Ascending aorta (tissue), 2 donors: ENCODE measurements at regions of chr5 and their contacts with region 1.

Region 1: GRCh38 chr5:42767491-42768105 is 11.0 kb downstream of the CCDC152 start:
- DNase-seq: no peak
- H3K4me3 ChIP-seq: no peak overlapping the region
- H3K27ac ChIP-seq: no peak overlapping the region
- H3K4me1 ChIP-seq: no peaks in the 10 kb centered on the region
- H3K27me3 ChIP-seq: no peaks in the 10 kb centered on the region
- CTCF ChIP-seq: peak; percentile 23 to 67 (median 35)

Region 2: DNA sequence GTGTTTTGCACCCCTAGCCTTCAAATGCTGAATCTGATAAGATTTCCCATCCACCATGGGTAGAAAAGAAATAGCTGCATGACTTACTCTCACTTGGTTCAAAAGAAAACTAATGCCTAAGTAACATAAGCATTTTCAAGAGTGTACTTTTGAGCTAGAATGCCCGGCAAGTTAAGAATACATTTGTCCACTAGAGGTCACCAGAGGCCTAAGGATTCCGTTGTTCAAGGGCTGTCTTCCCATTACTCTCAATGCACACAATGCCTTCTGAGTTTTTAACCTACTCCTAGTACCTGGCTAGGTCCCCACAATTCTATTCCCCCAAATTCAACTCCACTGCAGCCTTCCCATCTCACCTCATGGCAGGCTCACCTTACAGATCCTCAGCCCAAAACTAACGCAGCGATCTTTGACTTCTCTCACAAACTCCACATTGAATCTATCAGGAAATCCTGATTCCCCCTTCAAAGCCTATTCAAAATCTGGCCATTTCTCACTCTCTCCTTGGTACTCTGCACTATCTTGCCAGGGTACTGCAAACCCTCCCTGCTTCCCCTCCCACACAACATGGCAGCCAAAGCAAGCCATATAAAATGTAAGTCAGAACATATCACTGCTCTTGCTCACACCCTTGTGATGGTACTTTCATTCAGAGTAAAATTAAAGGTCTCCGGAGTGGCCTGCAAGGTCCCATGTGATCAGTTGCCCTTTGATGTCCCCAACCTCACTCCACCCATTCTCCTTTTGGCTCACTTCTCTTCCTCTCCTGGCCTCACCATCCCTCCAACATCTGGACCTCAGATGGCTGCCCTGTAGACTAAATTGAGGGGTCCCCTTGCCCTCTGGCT is 910.7 kb before region 1 on chr5:
- intact Hi-C with region 1: loop called (anchors 2 kb)
- DNase-seq: peak in 1 of 2 donors; percentile 73
- H3K4me3 ChIP-seq: no peak overlapping the region
- H3K27ac ChIP-seq: peak overlapping the region in 1 of 2 donors; percentile 32
- H3K4me1 ChIP-seq: no peaks in the 10 kb centered on the region
- H3K27me3 ChIP-seq: no peaks in the 10 kb centered on the region
- CTCF ChIP-seq: peak; percentile 45 to 76 (median 72)

Region 3: GRCh38 chr5:42005561-42006153 is 761.9 kb before region 1 on chr5:
- intact Hi-C with region 1: loop called (anchors 5 kb)
- DNase-seq: no peak
- H3K4me3 ChIP-seq: no peak overlapping the region
- H3K27ac ChIP-seq: no peak overlapping the region
- H3K4me1 ChIP-seq: no peaks in the 10 kb centered on the region
- H3K27me3 ChIP-seq: no peaks in the 10 kb centered on the region
- CTCF ChIP-seq: peak; percentile 4 to 64 (median 59)

Region 4: GRCh38 chr5:42423285-42424165 is 344.1 kb before region 1 on chr5 and contains the start of gene GHR:
- intact Hi-C with region 1: loop called (anchors 5 kb)
- DNase-seq: peak in 1 of 2 donors; percentile 91
- H3K4me3 ChIP-seq: peak within 1 kb of the TSS; percentile 68 to 73
- H3K27ac ChIP-seq: peak within 1 kb of the TSS; percentile 69 to 77
- H3K4me1 ChIP-seq: peaks cover 0 to 4% of the 10 kb centered on the region in 2 donors
- H3K27me3 ChIP-seq: no peaks in the 10 kb centered on the region
- CTCF ChIP-seq: peak; percentile 69 to 83 (median 79)
- total RNA-seq, gene GHR: 6.4 TPM

Region 5: GRCh38 chr5:43099615-43100014 is 332.0 kb after region 1 on chr5:
- intact Hi-C with region 1: no loop called
- DNase-seq: no peak
- H3K4me3 ChIP-seq: no peak overlapping the region
- H3K27ac ChIP-seq: no peak overlapping the region
- H3K4me1 ChIP-seq: no peaks in the 10 kb centered on the region
- H3K27me3 ChIP-seq: no peaks in the 10 kb centered on the region
- CTCF ChIP-seq: no peak

Region 6: GRCh38 chr5:43680286-43680685 is 912.7 kb after region 1 on chr5:
- intact Hi-C with region 1: no loop called
- DNase-seq: no peak
- H3K4me3 ChIP-seq: no peak overlapping the region
- H3K27ac ChIP-seq: peak overlapping the region in 1 of 2 donors; percentile 17
- H3K4me1 ChIP-seq: peaks cover 3 to 35% of the 10 kb centered on the region in 2 donors
- H3K27me3 ChIP-seq: no peaks in the 10 kb centered on the region
- CTCF ChIP-seq: no peak